HEK293T (cell line): ENCODE measurements at regions of chr3 and their contacts with region 1.

Region 1: DNA sequence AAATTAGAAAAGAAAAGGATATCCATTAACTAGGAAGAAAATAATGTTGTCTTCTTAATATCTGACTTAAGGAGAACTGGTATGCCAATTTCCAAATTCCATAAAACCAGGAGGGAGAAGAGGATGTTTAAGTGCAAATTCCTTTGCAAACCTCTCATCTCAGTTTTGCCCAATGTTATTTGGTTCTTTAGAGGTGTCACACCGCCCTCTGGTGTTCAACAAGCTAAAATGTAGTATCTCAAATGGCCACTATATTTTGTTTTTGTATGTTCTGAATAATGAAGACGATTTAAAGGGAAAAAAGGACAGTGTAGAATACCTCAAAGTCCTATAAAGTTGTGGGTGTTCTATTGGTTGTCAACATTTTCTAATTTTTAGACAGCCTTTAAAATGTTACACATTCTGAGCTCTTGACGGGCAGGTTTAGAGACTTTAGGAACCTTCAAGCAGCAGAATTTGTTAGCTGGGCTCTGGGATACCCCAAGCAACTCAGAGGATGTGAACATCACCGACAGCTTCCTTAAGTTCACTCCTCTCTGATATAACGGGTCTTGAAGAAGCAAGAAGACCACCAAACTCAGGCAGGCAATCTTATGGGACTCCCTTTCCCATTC is 458.3 kb downstream of the MFSD1 start:
- DNase-seq: peak; percentile 37

Region 2: GRCh38 chr3:158845765-158846350 is 414.3 kb before region 1 on chr3:
- CTCF ChIA-PET with region 1: interaction called, 19 read pairs
- POLR2A ChIA-PET with region 1: no interaction called
- DNase-seq: peak; percentile 67

Region 3: DNA sequence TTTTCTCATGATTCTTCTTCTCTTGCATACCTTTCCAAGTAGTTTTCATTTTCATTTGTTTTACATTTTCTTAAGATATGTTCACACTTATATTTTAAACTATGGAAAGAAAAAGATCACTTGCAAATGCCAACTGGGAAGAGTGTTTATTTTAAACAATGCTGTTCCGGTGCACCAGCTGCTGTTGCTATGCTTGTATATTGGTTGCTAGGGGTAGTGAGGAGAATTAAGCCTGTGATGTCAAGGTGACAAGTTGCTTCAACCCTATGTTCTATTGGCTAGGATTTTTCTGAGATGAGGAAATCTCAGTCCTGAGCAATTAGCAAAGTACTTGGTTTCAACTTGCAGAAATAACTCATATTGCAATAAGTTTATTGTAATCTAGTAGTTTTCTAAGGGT is 41.8 kb after region 1 on chr3:
- CTCF ChIA-PET with region 1: no interaction called
- POLR2A ChIA-PET with region 1: no interaction called
- DNase-seq: no peak

Region 4: DNA sequence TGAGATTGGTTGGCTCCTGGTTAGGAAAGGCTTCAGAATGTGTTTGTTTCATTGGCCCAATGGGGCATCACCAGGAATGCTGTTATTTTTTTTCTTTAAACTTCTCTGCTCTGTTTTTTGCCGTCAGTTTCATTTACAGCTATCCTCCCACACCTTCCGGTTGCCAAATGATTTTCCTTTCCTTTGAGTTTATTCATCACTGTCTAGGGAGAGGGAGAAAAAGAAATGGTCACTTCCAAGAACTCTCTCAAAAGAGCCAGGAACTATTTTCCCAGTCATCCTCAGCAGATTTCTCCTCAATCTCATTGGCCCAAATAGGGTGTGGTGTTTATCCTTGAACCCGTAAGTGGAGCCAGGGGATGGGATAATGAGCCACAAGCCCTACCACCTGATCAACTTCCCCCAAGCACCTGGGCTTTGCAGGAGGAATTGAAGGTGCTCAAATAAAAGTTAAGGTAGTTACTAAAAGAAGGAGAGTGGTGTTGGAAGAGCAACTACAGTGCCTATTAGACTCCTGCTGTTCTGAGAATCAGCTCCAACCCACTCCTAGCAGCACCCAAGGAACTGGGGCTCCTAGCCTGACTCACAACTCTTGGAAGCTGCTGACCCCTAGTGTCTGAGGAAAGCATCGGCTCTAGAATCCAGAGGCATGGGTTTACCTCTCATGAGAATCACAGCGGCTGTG is 544.7 kb after region 1 on chr3:
- CTCF ChIA-PET with region 1: interaction called, 11 read pairs
- POLR2A ChIA-PET with region 1: no interaction called
- DNase-seq: peak; percentile 80